SK-N-SH (cell line): ENCODE measurements at regions of chr14 and their contacts with region 1.

Region 1: DNA sequence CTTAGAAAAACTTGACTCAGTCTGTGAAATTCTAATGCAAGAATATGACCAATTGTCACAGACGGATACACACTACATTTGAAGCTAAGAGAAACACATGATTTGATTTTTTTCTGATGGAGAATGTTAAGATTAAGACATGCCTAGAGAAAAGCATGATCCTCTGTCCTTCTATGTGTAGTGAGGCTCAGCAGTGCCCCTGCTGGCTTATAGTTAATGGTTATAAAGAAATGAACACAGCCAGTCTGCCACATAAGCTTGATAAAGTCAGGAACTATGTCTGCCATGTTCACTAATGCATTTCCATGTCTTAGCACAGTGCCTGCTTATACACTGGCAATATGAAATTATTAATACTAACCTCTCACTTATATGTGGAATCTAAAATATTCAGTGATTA is 168.1 kb upstream of the DAAM1 start:
- DNase-seq: peak; percentile 8
- H3K4me3 ChIP-seq: no peak overlapping the region; a peak in 1 of 4 replicates
- H3K27ac ChIP-seq: no peak overlapping the region
- H3K4me1 ChIP-seq: no peaks in the 10 kb centered on the region; a peak in 2 of 4 replicates
- H3K27me3 ChIP-seq: no peaks in the 10 kb centered on the region
- CTCF ChIP-seq: peak; percentile 62
- EP300 ChIP-seq: no peak
- RAD21 ChIP-seq: peak; percentile 60

Region 2: DNA sequence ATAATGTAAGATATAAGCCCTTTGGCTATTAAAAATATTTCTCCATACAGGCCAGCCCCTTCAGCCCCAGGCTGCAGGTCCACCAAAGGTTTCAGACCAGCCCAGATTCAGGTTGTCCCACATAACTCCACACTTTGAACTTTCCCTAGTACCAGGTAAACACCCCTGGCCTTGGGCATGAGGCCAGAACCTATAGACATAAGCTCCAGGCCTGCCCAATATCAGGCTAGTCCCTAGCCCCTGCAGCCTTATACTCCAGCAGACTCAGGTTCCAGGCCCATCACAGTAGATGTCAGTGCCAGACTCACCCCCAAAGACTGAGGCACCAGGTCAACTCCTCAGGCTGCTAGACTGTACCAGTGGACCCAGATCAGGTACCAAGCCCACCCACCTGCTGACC is 10.4 kb before region 1 on chr14:
- CTCF ChIA-PET with region 1: interaction called, 28 read pairs
- POLR2A ChIA-PET with region 1: no interaction called
- DNase-seq: no peak
- H3K4me3 ChIP-seq: no peak overlapping the region
- H3K27ac ChIP-seq: no peak overlapping the region
- H3K4me1 ChIP-seq: no peaks in the 10 kb centered on the region
- H3K27me3 ChIP-seq: no peaks in the 10 kb centered on the region
- CTCF ChIP-seq: no peak
- EP300 ChIP-seq: no peak
- RAD21 ChIP-seq: no peak